CD14-positive monocyte (primary cell): ENCODE measurements at regions of chr4 and their contacts with region 1.

Region 1: GRCh38 chr4:147879676-147880075 is 147.8 kb downstream of the ARHGAP10 start:
- DNase-seq: no peak
- H3K4me3 ChIP-seq: no peak overlapping the region
- H3K4me3 Mint-ChIP-seq: no peak overlapping the region
- H3K27ac ChIP-seq: no peak overlapping the region
- H3K27ac Mint-ChIP-seq: no peak overlapping the region
- H3K4me1 ChIP-seq: no peaks in the 10 kb centered on the region
- H3K4me1 Mint-ChIP-seq: no peaks in the 10 kb centered on the region
- H3K27me3 ChIP-seq: no peaks in the 10 kb centered on the region
- H3K27me3 Mint-ChIP-seq: peaks cover 0 to 2% (median 1%) of the 10 kb centered on the region in 3 donors
- CTCF ChIP-seq: no peak

Region 2: GRCh38 chr4:147518846-147519767 is 360.6 kb before region 1 on chr4:
- intact Hi-C with region 1: loop called in 1 of 2 experiments (anchors 10 kb)
- DNase-seq: peak in 2 of 3 donors; percentile 2 to 7
- H3K4me3 ChIP-seq: no peak overlapping the region
- H3K4me3 Mint-ChIP-seq: no peak overlapping the region
- H3K27ac ChIP-seq: no peak overlapping the region
- H3K27ac Mint-ChIP-seq: no peak overlapping the region
- H3K4me1 ChIP-seq: no peaks in the 10 kb centered on the region
- H3K4me1 Mint-ChIP-seq: no peaks in the 10 kb centered on the region
- H3K27me3 ChIP-seq: no peaks in the 10 kb centered on the region
- H3K27me3 Mint-ChIP-seq: peaks cover 1 to 4% (median 3%) of the 10 kb centered on the region in 3 donors
- CTCF ChIP-seq: peak; percentile 62